CD4-positive, alpha-beta memory T cell (primary cell): ENCODE measurements at regions of chr17 and their contacts with region 1.

Region 1: DNA sequence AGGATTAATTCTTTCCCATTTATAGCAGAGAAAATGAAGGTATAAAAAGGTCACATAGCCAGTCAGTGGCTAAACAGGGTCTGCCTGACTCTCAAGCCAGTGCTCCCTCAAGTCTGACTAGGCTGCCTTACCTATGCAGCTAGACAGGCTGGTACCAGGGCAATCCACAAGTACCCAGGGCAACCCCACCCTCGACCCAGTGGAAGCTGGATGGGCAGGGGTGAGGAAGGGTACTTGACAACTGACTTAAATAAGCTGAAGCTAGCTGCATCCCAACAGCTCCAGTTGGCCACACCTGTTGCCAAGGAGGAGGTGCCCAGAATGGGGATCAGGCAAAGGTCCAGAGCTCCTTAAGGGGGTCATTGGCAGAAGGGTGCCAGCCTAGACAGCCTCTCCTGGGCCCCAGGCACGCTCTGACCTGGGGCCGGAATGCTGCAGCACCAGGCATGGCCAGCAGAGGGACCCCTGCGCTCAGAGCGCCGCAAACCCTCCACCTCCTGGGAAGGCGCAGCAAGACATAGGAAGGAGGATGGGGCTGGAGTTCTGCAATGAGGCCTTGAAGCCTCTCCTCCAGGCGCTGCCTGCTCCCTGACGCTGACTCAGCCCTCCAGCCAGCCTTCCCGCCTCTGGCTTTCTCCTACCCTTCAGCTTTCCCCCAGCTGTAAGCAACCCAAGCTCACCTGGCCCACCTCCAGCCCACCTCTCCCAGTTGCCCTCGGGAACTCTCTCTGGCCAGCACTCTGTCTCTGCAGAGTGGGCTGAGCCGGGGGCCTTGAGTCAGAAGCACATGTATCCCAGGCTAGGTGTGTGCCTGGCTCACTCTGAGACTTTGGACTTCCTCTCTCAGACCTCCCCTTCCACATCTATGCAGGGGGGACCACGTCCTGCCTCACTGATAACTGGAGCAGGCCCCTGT is 28.8 kb downstream of the MPP2 start:
- DNase-seq: peak in 4 of 5 donors; percentile 35 to 55 (median 45)
- H3K4me3 ChIP-seq: no peak overlapping the region
- H3K4me3 Mint-ChIP-seq: peak overlapping the region in 1 of 8 donors; percentile 43
- H3K27ac ChIP-seq: no peak overlapping the region
- H3K27ac Mint-ChIP-seq: no peak overlapping the region
- H3K4me1 ChIP-seq: no peaks in the 10 kb centered on the region
- H3K4me1 Mint-ChIP-seq: peaks cover 0 to 4% (median 0%) of the 10 kb centered on the region in 4 donors
- H3K27me3 ChIP-seq: no peaks in the 10 kb centered on the region
- H3K27me3 Mint-ChIP-seq: peaks cover 0 to 2% of the 10 kb centered on the region in 2 donors

Region 2: GRCh38 chr17:43846221-43846712 is 32.3 kb before region 1 on chr17:
- CTCF ChIA-PET with region 1: interaction called, 11 read pairs
- POLR2A ChIA-PET with region 1: no interaction called
- intact Hi-C with region 1: no loop called
- DNase-seq: peak; percentile 56 to 70 (median 61)
- H3K4me3 ChIP-seq: no peak overlapping the region
- H3K4me3 Mint-ChIP-seq: no peak overlapping the region
- H3K27ac ChIP-seq: no peak overlapping the region
- H3K27ac Mint-ChIP-seq: no peak overlapping the region
- H3K4me1 ChIP-seq: no peaks in the 10 kb centered on the region
- H3K4me1 Mint-ChIP-seq: peaks cover 0 to 3% (median 0%) of the 10 kb centered on the region in 4 donors
- H3K27me3 ChIP-seq: peaks cover 5% of the 10 kb centered on the region
- H3K27me3 Mint-ChIP-seq: peaks cover 16 to 22% of the 10 kb centered on the region in 2 donors

Region 3: GRCh38 chr17:43868226-43868994 is 10.1 kb before region 1 on chr17:
- CTCF ChIA-PET with region 1: interaction called, 37 read pairs
- POLR2A ChIA-PET with region 1: no interaction called
- intact Hi-C with region 1: no loop called
- DNase-seq: no peak
- H3K4me3 ChIP-seq: no peak overlapping the region
- H3K4me3 Mint-ChIP-seq: peak overlapping the region in 1 of 8 donors; percentile 23
- H3K27ac ChIP-seq: no peak overlapping the region
- H3K27ac Mint-ChIP-seq: peak overlapping the region in 1 of 7 donors; percentile 25
- H3K4me1 ChIP-seq: no peaks in the 10 kb centered on the region
- H3K4me1 Mint-ChIP-seq: no peaks in the 10 kb centered on the region
- H3K27me3 ChIP-seq: no peaks in the 10 kb centered on the region
- H3K27me3 Mint-ChIP-seq: peaks cover 16 to 26% of the 10 kb centered on the region in 2 donors

Region 4: GRCh38 chr17:43891851-43892646 is 13.5 kb after region 1 on chr17:
- CTCF ChIA-PET with region 1: interaction called, 33 read pairs
- POLR2A ChIA-PET with region 1: no interaction called
- intact Hi-C with region 1: no loop called
- DNase-seq: no peak
- H3K4me3 ChIP-seq: no peak overlapping the region
- H3K4me3 Mint-ChIP-seq: no peak overlapping the region
- H3K27ac ChIP-seq: no peak overlapping the region
- H3K27ac Mint-ChIP-seq: peak overlapping the region in 3 of 7 donors; percentile 3 to 42 (median 29)
- H3K4me1 ChIP-seq: no peaks in the 10 kb centered on the region
- H3K4me1 Mint-ChIP-seq: no peaks in the 10 kb centered on the region
- H3K27me3 ChIP-seq: peaks cover 2% of the 10 kb centered on the region
- H3K27me3 Mint-ChIP-seq: peaks cover 6 to 11% of the 10 kb centered on the region in 2 donors

Region 5: GRCh38 chr17:43940630-43941029 is 62.1 kb after region 1 on chr17:
- CTCF ChIA-PET with region 1: interaction called, 10 read pairs
- POLR2A ChIA-PET with region 1: no interaction called
- intact Hi-C with region 1: no loop called
- DNase-seq: no peak
- H3K4me3 ChIP-seq: no peak overlapping the region
- H3K4me3 Mint-ChIP-seq: no peak overlapping the region
- H3K27ac ChIP-seq: no peak overlapping the region
- H3K27ac Mint-ChIP-seq: no peak overlapping the region
- H3K4me1 ChIP-seq: peaks cover 4% of the 10 kb centered on the region
- H3K4me1 Mint-ChIP-seq: peaks cover 1 to 9% (median 4%) of the 10 kb centered on the region in 4 donors
- H3K27me3 ChIP-seq: no peaks in the 10 kb centered on the region
- H3K27me3 Mint-ChIP-seq: peaks cover 4 to 7% of the 10 kb centered on the region in 2 donors

Region 6: DNA sequence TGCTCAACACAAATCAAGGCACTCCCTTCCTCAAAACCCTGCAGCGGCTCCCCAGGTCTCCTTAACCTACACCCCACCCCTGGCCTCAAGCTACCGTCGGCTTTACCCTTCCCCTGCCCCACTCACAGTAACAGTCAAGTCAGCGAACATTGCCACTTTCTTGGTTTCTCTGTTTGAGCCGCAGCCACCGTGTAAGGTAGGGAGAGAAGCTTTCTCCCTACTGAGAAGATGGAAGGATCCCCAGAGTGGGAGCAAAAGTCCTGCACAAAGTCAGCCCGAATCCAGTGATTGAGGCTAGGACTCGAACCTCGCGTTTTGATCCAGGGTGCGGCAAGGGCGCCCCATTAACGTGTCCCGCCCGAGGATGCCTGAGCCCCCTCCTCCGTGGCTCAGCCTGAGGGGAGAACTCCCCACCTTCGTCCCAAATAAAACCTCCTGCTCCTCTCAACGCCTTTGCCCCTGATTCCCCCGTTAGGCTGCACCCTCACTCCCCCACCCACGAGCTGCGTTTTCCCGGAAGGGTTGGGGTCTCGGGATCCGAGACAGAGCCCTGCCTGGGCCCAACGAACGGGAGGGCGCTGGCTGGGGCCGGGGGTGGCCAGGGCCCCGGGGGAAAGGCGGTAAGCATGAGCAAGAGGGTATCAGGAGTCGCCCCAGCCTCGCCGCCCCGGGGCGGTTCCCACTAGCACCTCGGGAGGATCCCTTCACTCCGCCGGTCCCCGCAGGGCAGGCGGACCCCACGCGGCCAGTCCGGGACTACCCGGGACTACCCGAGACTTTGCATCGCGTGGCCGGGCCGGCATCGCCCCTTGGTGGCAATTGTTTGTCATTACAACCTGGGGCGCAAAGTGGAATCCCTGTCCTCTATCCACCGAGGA is 116.0 kb after region 1 on chr17:
- CTCF ChIA-PET with region 1: interaction called, 33 read pairs
- POLR2A ChIA-PET with region 1: no interaction called
- intact Hi-C with region 1: loop called (anchors 1 kb)
- DNase-seq: peak; percentile 61 to 69 (median 65)
- H3K4me3 ChIP-seq: no peak overlapping the region
- H3K4me3 Mint-ChIP-seq: peak overlapping the region in 2 of 8 donors; percentile 4 to 51
- H3K27ac ChIP-seq: no peak overlapping the region
- H3K27ac Mint-ChIP-seq: peak overlapping the region in 1 of 7 donors; percentile 13
- H3K4me1 ChIP-seq: peaks cover 10% of the 10 kb centered on the region
- H3K4me1 Mint-ChIP-seq: peaks cover 0 to 3% (median under 1%) of the 10 kb centered on the region in 4 donors
- H3K27me3 ChIP-seq: peaks cover 3% of the 10 kb centered on the region
- H3K27me3 Mint-ChIP-seq: peaks cover 8 to 9% of the 10 kb centered on the region in 2 donors

Region 7: DNA sequence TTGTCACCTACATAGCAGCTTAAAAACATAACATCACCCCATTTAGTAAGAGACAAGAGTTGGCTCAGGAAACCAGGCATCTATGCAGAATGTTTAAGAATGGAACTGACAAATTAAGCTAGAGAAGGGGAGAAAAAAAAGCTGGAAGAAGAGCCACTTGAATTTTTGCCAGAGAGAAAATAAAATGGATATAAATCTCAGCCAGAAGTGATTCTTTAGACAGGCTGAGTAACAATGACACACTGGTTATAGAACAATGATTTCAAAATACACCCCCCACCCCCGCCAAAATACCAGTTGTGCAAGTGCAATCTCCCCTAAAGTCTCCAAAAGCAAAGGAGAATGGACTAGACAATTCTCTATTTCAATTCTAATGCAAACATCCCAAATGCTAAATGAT is 165.5 kb after region 1 on chr17:
- CTCF ChIA-PET with region 1: interaction called, 33 read pairs
- POLR2A ChIA-PET with region 1: no interaction called
- intact Hi-C with region 1: loop called (anchors 1 kb)
- DNase-seq: no peak
- H3K4me3 ChIP-seq: no peak overlapping the region
- H3K4me3 Mint-ChIP-seq: no peak overlapping the region
- H3K27ac ChIP-seq: no peak overlapping the region
- H3K27ac Mint-ChIP-seq: peak overlapping the region in 3 of 7 donors; percentile 18 to 35 (median 34)
- H3K4me1 ChIP-seq: peaks cover 8% of the 10 kb centered on the region
- H3K4me1 Mint-ChIP-seq: peaks cover 11 to 16% (median 13%) of the 10 kb centered on the region in 4 donors
- H3K27me3 ChIP-seq: no peaks in the 10 kb centered on the region
- H3K27me3 Mint-ChIP-seq: no peaks in the 10 kb centered on the region